PC-9 (cell line): ENCODE measurements at regions of chr2 and their contacts with region 1.

Region 1: DNA sequence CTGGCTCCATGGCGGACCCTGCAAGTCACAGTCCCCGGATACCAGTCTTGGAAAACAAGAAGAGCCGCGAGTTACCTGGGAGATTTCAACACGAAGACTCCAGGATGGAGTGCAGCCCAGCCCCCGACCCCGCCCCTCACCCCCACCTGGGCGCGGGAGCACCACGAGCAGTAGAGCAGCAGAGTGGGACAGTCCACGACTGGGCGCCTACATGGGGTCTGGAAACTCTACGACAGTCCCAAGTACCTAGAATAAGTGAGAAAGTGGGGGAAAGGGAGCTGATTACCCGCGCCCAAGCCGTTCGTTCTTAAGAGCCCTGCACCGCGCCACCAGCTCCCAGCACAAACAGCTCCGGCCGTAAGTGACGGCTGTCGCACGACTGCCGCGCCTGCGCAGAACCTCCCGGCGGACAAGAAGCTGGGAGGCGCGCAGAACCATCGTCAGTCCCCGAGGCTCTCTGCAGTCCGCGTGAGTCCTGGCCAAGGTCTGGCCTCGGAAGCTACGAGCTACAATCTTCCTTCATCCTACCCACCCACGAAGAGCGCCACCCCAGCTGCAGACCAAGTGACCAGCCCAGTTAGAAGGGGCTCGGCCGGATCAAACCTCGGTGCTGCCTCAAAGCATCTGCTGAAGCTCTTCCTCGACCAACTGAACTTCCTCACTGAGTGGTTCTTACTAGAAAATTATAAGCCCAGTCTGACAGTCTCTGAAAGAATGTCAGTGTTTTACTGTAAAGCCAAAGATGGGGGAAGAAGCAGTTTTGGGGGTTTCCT is at the start of gene DPY30:
- DNase-seq: peak; percentile 88 to 90
- H3K4me3 ChIP-seq: peak within 1 kb of the TSS; percentile 70
- H3K27ac ChIP-seq: peak within 1 kb of the TSS; percentile 70
- H3K4me1 ChIP-seq: no peaks in the 10 kb centered on the region; the same call in none of the 2 replicates
- H3K27me3 ChIP-seq: no peaks in the 10 kb centered on the region
- CTCF ChIP-seq: no peak
- total RNA-seq, gene DPY30: 89.6 and 109 TPM in 2 replicates

Region 2: GRCh38 chr2:32010670-32011484 is 28.8 kb before region 1 on chr2 and contains the start of gene MEMO1:
- CTCF ChIA-PET with region 1: no interaction called
- POLR2A ChIA-PET with region 1: interaction called, 5 read pairs
- intact Hi-C with region 1: loop called (anchors 2 kb)
- DNase-seq: peak; percentile 86 to 91
- H3K4me3 ChIP-seq: peak within 1 kb of the TSS; percentile 100
- H3K27ac ChIP-seq: peak within 1 kb of the TSS; percentile 74
- H3K4me1 ChIP-seq: peaks cover 34% of the 10 kb centered on the region
- H3K27me3 ChIP-seq: no peaks in the 10 kb centered on the region
- CTCF ChIP-seq: no peak
- total RNA-seq, gene MEMO1: 29.5 and 40.2 TPM in 2 replicates

Region 3: GRCh38 chr2:32135409-32135808 is 95.8 kb after region 1 on chr2:
- CTCF ChIA-PET with region 1: no interaction called
- POLR2A ChIA-PET with region 1: no interaction called
- intact Hi-C with region 1: loop called (anchors 1 kb)
- DNase-seq: peak; percentile 37 to 90
- H3K4me3 ChIP-seq: no peak overlapping the region
- H3K27ac ChIP-seq: peak overlapping the region; percentile 15
- H3K4me1 ChIP-seq: peaks cover 9% of the 10 kb centered on the region; the same call in 1 of the 2 replicates
- H3K27me3 ChIP-seq: no peaks in the 10 kb centered on the region
- CTCF ChIP-seq: peak; percentile 67

Region 4: GRCh38 chr2:32168513-32168912 is 128.9 kb after region 1 on chr2:
- CTCF ChIA-PET with region 1: no interaction called
- POLR2A ChIA-PET with region 1: interaction called, 11 read pairs
- intact Hi-C with region 1: loop called (anchors 10 kb)
- DNase-seq: no peak
- H3K4me3 ChIP-seq: no peak overlapping the region
- H3K27ac ChIP-seq: no peak overlapping the region
- H3K4me1 ChIP-seq: peaks cover 19% of the 10 kb centered on the region
- H3K27me3 ChIP-seq: no peaks in the 10 kb centered on the region
- CTCF ChIP-seq: no peak

Region 5: GRCh38 chr2:32356735-32357644 is 317.4 kb after region 1 on chr2 and contains the start of gene BIRC6:
- CTCF ChIA-PET with region 1: no interaction called
- POLR2A ChIA-PET with region 1: no interaction called
- intact Hi-C with region 1: no loop called
- DNase-seq: peak; percentile 89 to 98
- H3K4me3 ChIP-seq: peak within 1 kb of the TSS; percentile 98
- H3K27ac ChIP-seq: peak within 1 kb of the TSS; percentile 75
- H3K4me1 ChIP-seq: peaks cover 12% of the 10 kb centered on the region
- H3K27me3 ChIP-seq: no peaks in the 10 kb centered on the region
- CTCF ChIP-seq: no peak
- total RNA-seq, gene BIRC6: 69.6 and 79.0 TPM in 2 replicates

Region 6: GRCh38 chr2:32474381-32474780 is 434.7 kb after region 1 on chr2:
- CTCF ChIA-PET with region 1: no interaction called
- POLR2A ChIA-PET with region 1: no interaction called
- intact Hi-C with region 1: no loop called
- DNase-seq: no peak
- H3K4me3 ChIP-seq: no peak overlapping the region
- H3K27ac ChIP-seq: no peak overlapping the region
- H3K4me1 ChIP-seq: no peaks in the 10 kb centered on the region
- H3K27me3 ChIP-seq: no peaks in the 10 kb centered on the region
- CTCF ChIP-seq: no peak